CD4-positive, alpha-beta T cell (primary cell): ENCODE measurements at regions of chr6 and their contacts with region 1.

Region 1: DNA sequence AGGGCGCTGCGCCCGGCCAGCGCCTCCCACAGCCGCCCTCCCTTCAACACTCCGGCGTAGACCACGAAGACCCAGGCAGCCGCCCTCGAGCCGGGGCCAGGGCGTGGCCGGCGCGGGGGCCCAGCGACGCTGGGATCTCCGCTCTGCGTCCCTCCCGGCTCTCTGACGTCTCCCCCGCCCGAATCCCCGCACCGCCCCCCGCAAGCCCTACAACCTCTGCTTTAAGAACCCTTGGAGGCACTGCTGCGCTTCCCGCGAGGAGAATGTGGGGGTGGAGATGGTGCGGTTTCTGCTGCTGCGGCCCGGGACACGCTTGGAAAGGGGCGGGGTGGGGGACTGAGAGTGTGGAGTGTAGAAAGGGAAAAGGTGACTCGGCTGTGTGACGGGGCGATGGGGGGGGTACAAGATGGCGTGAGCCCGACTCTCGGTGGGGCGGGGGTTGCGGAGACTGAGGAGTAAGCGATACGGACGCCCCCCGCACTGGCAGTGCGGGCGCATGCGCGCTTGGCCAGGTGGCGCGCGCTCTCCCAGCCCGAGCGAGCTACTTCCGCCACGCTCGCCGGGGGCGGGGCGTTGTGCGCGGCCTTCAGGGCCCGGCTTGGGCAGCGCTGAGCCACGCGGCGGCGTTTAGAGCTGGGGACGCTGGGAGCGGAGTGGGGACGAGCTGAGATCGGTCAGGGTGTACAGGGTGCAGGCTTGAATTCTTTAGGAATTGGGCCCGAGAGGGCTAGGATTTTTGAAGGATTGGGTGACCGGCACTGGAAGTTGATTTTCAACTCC is at the start of gene SUPT3H:
- DNase-seq: peak; percentile 74 to 98 (median 86)
- ATAC-seq: peak; percentile 80
- H3K4me3 ChIP-seq: peak within 1 kb of the TSS; percentile 85
- H3K4me3 Mint-ChIP-seq: peak within 1 kb of the TSS; percentile 100
- H3K27ac ChIP-seq: peak within 1 kb of the TSS; percentile 91 to 93
- H3K27ac Mint-ChIP-seq: peak within 1 kb of the TSS; percentile 99
- H3K4me1 ChIP-seq: peaks cover 8% of the 10 kb centered on the region
- H3K4me1 Mint-ChIP-seq: peaks cover 31% of the 10 kb centered on the region
- H3K27me3 ChIP-seq: no peaks in the 10 kb centered on the region
- H3K27me3 Mint-ChIP-seq: no peaks in the 10 kb centered on the region
- CTCF ChIP-seq: no peak
- total RNA-seq, gene SUPT3H: 8.9 to 10.5 TPM

Region 2: GRCh38 chr6:44932651-44933091 is 445.1 kb before region 1 on chr6:
- CTCF ChIA-PET with region 1: no interaction called
- POLR2A ChIA-PET with region 1: interaction called, 7 read pairs
- intact Hi-C with region 1: loop called (anchors 5 to 10 kb)
- DNase-seq: peak; percentile 4 to 86 (median 40)
- ATAC-seq: peak; percentile 77
- H3K4me3 ChIP-seq: peak overlapping the region; percentile 42
- H3K4me3 Mint-ChIP-seq: peak overlapping the region; percentile 89
- H3K27ac ChIP-seq: peak overlapping the region; percentile 63 to 64
- H3K27ac Mint-ChIP-seq: peak overlapping the region; percentile 95
- H3K4me1 ChIP-seq: peaks cover 19% of the 10 kb centered on the region
- H3K4me1 Mint-ChIP-seq: peaks cover 65% of the 10 kb centered on the region
- H3K27me3 ChIP-seq: no peaks in the 10 kb centered on the region
- H3K27me3 Mint-ChIP-seq: no peaks in the 10 kb centered on the region
- CTCF ChIP-seq: no peak

Region 3: GRCh38 chr6:44976719-44977641 is 400.8 kb before region 1 on chr6:
- CTCF ChIA-PET with region 1: no interaction called
- POLR2A ChIA-PET with region 1: interaction called, 15 read pairs
- intact Hi-C with region 1: no loop called
- DNase-seq: peak in 5 of 14 experiments; percentile 10 to 78 (median 65)
- ATAC-seq: peak; percentile 90
- H3K4me3 ChIP-seq: no peak overlapping the region
- H3K4me3 Mint-ChIP-seq: peak overlapping the region; percentile 43
- H3K27ac ChIP-seq: peak overlapping the region in 1 of 2 donors; percentile 47
- H3K27ac Mint-ChIP-seq: peak overlapping the region; percentile 77
- H3K4me1 ChIP-seq: peaks cover 6% of the 10 kb centered on the region
- H3K4me1 Mint-ChIP-seq: peaks cover 78% of the 10 kb centered on the region
- H3K27me3 ChIP-seq: no peaks in the 10 kb centered on the region
- H3K27me3 Mint-ChIP-seq: no peaks in the 10 kb centered on the region
- CTCF ChIP-seq: no peak

Region 4: DNA sequence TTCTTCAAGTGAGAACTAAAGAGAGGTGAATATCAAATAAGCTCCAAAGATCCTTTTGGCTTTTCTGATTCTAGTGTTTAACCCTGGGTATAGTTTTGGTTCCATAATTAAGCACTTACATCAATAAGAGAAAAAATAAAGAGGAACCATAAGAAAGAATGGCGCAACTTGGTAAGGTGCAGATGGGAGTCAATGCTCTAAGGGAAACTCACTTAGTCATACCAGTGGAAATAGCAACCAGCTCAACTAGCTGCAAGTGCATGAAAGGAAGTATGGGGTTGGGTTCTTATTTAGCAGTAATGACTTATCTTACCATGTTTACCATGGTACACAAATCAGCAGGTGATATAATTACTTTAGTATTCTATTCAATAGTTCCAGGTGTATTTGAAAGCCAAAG is 346.1 kb before region 1 on chr6:
- CTCF ChIA-PET with region 1: no interaction called
- POLR2A ChIA-PET with region 1: no interaction called
- intact Hi-C with region 1: no loop called
- DNase-seq: peak in 3 of 14 experiments; percentile 11 to 54 (median 37)
- ATAC-seq: no peak
- H3K4me3 ChIP-seq: no peak overlapping the region
- H3K4me3 Mint-ChIP-seq: no peak overlapping the region
- H3K27ac ChIP-seq: no peak overlapping the region
- H3K27ac Mint-ChIP-seq: no peak overlapping the region
- H3K4me1 ChIP-seq: no peaks in the 10 kb centered on the region
- H3K4me1 Mint-ChIP-seq: no peaks in the 10 kb centered on the region
- H3K27me3 ChIP-seq: no peaks in the 10 kb centered on the region
- H3K27me3 Mint-ChIP-seq: no peaks in the 10 kb centered on the region
- CTCF ChIP-seq: no peak

Region 5: GRCh38 chr6:45310118-45310788 is 67.5 kb before region 1 on chr6:
- CTCF ChIA-PET with region 1: no interaction called
- POLR2A ChIA-PET with region 1: interaction called, 6 read pairs
- intact Hi-C with region 1: loop called in 1 of 2 experiments (anchors 5 kb)
- DNase-seq: peak in 12 of 14 experiments; percentile 1 to 74 (median 26)
- ATAC-seq: peak; percentile 83
- H3K4me3 ChIP-seq: no peak overlapping the region
- H3K4me3 Mint-ChIP-seq: peak overlapping the region; percentile 32
- H3K27ac ChIP-seq: peak overlapping the region; percentile 40 to 44
- H3K27ac Mint-ChIP-seq: peak overlapping the region; percentile 74
- H3K4me1 ChIP-seq: peaks cover 12% of the 10 kb centered on the region
- H3K4me1 Mint-ChIP-seq: peaks cover 63% of the 10 kb centered on the region
- H3K27me3 ChIP-seq: no peaks in the 10 kb centered on the region
- H3K27me3 Mint-ChIP-seq: no peaks in the 10 kb centered on the region
- CTCF ChIP-seq: no peak

Region 6: DNA sequence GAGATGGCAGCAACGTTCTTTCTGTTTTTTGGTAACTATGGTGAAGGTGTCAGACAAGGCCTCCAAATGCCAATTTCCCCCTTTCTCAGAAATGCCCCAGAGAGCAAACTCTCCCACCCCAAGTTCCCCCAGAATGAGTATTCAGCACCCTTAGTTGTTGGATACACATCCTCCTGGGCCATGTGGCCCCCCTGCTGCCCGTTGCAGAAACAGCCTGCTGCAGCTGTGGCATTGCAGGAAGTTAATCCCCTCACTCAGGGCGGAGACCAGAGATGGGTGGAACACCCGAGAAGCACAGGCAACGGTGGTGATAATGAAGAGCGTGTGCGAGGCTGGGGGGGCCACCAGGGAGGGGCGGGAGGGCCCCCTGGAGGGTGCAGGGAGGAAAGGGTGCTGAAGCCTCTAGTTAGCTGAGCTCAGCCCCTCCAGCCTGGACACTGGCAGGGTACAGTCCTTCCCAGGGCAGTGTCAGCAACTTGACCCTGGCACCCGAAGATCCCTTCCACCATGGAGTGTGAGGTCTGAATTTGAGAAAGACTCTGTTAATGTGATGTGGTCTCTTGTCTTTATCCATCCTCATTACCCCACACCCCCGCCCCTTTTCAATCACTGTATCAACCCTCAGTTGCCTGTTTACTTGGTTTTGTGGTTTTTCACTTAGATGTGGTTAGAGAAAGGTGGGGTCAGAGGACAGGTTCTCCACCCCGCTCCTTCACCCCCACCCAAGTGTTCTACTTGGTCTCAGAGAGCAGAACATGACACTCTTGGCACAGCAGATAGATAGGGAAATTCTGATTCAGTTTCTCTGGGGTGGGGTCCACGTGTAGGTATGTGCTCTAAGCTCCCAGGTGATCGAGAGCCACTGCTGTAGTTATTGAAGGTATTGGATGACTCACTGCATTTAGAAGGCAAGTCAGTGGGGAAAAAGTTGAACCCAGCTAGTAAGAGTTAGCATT is 208.8 kb after region 1 on chr6:
- CTCF ChIA-PET with region 1: no interaction called
- POLR2A ChIA-PET with region 1: interaction called, 10 read pairs
- intact Hi-C with region 1: no loop called
- DNase-seq: peak; percentile 31 to 96 (median 54)
- ATAC-seq: peak; percentile 81
- H3K4me3 ChIP-seq: peak overlapping the region; percentile 24
- H3K4me3 Mint-ChIP-seq: peak overlapping the region; percentile 84
- H3K27ac ChIP-seq: peak overlapping the region in 1 of 2 donors; percentile 16
- H3K27ac Mint-ChIP-seq: peak overlapping the region; percentile 79
- H3K4me1 ChIP-seq: peaks cover 59% of the 10 kb centered on the region
- H3K4me1 Mint-ChIP-seq: peaks cover 70% of the 10 kb centered on the region
- H3K27me3 ChIP-seq: no peaks in the 10 kb centered on the region
- H3K27me3 Mint-ChIP-seq: no peaks in the 10 kb centered on the region
- CTCF ChIP-seq: peak; percentile 25

Region 7: GRCh38 chr6:45706319-45706718 is 328.6 kb after region 1 on chr6:
- CTCF ChIA-PET with region 1: no interaction called
- POLR2A ChIA-PET with region 1: no interaction called
- intact Hi-C with region 1: no loop called
- DNase-seq: no peak
- ATAC-seq: no peak
- H3K4me3 ChIP-seq: no peak overlapping the region
- H3K4me3 Mint-ChIP-seq: no peak overlapping the region
- H3K27ac ChIP-seq: no peak overlapping the region
- H3K27ac Mint-ChIP-seq: no peak overlapping the region
- H3K4me1 ChIP-seq: peaks cover 17% of the 10 kb centered on the region
- H3K4me1 Mint-ChIP-seq: peaks cover 7% of the 10 kb centered on the region
- H3K27me3 ChIP-seq: no peaks in the 10 kb centered on the region
- H3K27me3 Mint-ChIP-seq: no peaks in the 10 kb centered on the region
- CTCF ChIP-seq: no peak

Region 8: DNA sequence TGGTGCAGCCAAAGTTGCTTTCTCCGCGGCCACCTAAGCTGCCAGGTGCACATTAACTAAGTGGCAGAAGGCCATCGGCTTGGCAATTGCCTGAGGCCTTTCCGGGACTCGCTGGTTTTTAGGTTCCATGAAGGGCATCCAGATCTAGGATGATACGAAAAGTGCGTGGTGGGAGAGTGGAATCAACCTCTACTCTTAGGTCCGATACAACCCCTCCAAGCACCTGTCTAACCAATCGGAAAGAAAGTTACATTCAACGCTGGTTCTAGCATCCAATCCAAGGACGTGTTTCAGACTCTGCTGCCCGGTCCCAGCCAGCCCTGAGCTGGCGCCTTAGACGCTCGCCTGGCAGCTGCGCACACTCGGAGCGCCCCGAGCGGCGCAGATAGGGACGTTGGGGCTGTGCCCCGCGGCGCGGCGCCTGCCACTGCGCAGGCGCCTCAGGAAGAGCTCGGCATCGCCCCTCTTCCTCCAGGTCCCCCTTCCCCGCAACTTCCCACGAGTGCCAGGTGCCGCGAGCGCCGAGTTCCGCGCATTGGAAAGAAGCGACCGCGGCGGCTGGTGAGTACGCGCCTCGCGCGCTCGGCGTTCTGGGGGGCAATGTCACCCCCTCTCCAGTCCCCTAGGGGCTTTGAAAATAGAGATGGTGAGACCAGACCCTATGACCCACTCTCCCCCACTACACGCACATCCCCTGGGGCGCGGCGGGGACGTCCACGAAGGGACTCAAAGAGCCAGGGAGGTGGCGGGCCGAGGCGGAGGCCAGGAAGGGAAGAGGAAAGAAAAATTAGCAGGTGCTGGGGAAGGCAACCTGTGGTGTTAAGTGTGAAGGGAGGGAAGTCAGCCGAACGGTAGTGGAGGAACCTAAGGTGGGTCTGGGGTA is 752.1 kb after region 1 on chr6 and contains the start of gene ENPP4:
- CTCF ChIA-PET with region 1: no interaction called
- POLR2A ChIA-PET with region 1: no interaction called
- intact Hi-C with region 1: loop called in 1 of 2 experiments (anchors 5 kb)
- DNase-seq: peak; percentile 79 to 97 (median 88)
- ATAC-seq: peak; percentile 99
- H3K4me3 ChIP-seq: peak within 1 kb of the TSS; percentile 99
- H3K4me3 Mint-ChIP-seq: peak within 1 kb of the TSS; percentile 96
- H3K27ac ChIP-seq: peak within 1 kb of the TSS; percentile 49 to 58
- H3K27ac Mint-ChIP-seq: peak within 1 kb of the TSS; percentile 83
- H3K4me1 ChIP-seq: peaks cover 18% of the 10 kb centered on the region
- H3K4me1 Mint-ChIP-seq: peaks cover 54% of the 10 kb centered on the region
- H3K27me3 ChIP-seq: no peaks in the 10 kb centered on the region
- H3K27me3 Mint-ChIP-seq: no peaks in the 10 kb centered on the region
- CTCF ChIP-seq: no peak
- total RNA-seq, gene ENPP4: 3.7 to 4.3 TPM